GM10248 (cell line): ENCODE measurements at regions of chr7 and their contacts with region 1.

Region 1: DNA sequence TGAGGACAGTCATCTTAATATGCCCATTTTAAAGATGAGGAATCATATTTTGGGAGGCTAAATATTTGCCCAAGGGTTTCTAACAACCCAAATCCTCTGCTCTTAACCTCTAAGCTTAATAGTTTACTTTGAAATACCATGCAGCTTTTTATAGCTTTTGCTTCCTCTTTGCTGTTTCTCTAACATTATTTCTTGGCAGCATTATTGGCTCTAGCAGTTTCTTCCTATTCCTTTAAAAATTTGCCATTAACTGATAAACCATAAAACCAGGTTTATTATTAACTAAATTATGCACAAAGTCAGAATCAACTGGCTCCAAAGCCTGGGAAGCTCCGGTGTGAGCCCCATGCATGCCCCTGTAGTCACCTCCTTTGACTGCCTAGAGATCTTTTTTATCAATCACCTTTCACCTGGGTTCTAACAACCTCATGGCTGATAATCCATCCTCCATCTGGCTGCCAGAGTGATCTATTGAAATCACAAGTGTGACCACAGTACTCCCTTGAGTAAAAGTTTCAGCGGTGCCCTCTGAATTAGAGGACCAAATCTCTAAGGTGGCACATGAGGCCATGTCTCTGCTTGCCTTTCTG is 62.4 kb downstream of the ITGB8 start:
- DNase-seq: no peak
- CTCF ChIP-seq: no peak

Region 2: GRCh38 chr7:20417260-20417659 is 24.1 kb after region 1 on chr7:
- CTCF ChIA-PET with region 1: interaction called, 10 read pairs
- POLR2A ChIA-PET with region 1: no interaction called
- DNase-seq: no peak
- CTCF ChIP-seq: no peak

Region 3: DNA sequence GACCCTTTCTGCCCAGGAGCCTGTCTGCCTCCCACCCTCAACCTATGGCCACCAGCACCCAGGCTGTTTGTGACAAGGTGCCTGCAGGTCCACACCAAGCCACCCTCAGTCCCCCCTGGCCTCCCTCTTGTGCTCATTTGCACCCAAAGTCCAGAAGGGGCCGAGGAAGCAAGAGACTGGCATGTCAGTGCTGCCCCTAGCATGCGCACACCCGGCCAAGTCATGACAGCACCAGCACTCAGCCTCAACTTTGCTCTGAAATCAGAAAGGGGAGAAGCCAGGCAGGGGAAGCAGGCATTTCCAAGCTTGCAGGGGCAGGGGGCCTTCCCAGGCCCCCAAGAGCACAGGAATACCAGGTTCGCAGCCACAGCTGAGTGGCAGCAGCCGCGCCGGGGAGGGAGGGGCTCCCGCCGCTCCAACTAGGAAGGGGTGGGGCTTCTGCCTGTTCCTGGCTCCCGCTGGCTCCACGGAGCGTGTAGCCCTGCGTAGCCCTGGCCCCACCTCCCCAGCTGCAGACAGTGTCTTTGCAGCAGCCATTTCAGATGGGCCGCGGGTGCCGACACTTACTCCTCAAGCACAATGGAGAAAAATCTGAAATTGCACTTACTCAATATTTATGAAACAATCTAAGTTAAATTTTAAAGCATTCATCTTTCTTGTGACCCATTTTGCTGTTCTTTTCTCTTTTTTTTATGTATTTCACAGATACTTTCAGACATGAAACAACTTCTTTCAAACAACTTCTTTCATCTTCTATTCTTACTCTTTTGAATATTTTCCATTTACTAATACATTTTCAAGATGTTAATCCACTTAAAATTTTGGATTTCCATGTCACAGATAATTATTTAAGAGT is 167.4 kb after region 1 on chr7:
- CTCF ChIA-PET with region 1: no interaction called
- POLR2A ChIA-PET with region 1: no interaction called
- DNase-seq: no peak
- CTCF ChIP-seq: no peak